ENCODE measurements at regions of chr19 and their contacts with region 1.

Region 1: GRCh38 chr19:49421039-49421877 is 2.0 kb downstream of the PTH2 start:
- DNase-seq: peak; percentile 33 to 51 (median 49)
- H3K4me3 ChIP-seq: no peak overlapping the region
- H3K4me3 Mint-ChIP-seq: peak overlapping the region in 1 of 2 donors; percentile 90
- H3K27ac ChIP-seq: no peak overlapping the region
- H3K27ac Mint-ChIP-seq: peak overlapping the region in 1 of 7 donors; percentile 28
- H3K4me1 ChIP-seq: peaks cover 13 to 21% of the 10 kb centered on the region in 2 donors
- H3K4me1 Mint-ChIP-seq: peaks cover 37% of the 10 kb centered on the region
- H3K27me3 ChIP-seq: peaks cover 59 to 70% of the 10 kb centered on the region in 2 donors
- H3K27me3 Mint-ChIP-seq: peaks cover 71 to 83% (median 79%) of the 10 kb centered on the region in 3 donors
- CTCF ChIP-seq: no peak

Region 2: GRCh38 chr19:49374665-49375434 is 46.4 kb before region 1 on chr19:
- intact Hi-C with region 1: loop called in 1 of 2 experiments (anchors 10 kb)
- DNase-seq: no peak
- H3K4me3 ChIP-seq: no peak overlapping the region
- H3K4me3 Mint-ChIP-seq: no peak overlapping the region
- H3K27ac ChIP-seq: no peak overlapping the region
- H3K27ac Mint-ChIP-seq: no peak overlapping the region
- H3K4me1 ChIP-seq: no peaks in the 10 kb centered on the region
- H3K4me1 Mint-ChIP-seq: no peaks in the 10 kb centered on the region
- H3K27me3 ChIP-seq: no peaks in the 10 kb centered on the region
- H3K27me3 Mint-ChIP-seq: peaks cover 6 to 12% (median 7%) of the 10 kb centered on the region in 3 donors
- CTCF ChIP-seq: no peak